Thyroid gland (tissue), 4 donors: ENCODE measurements at regions of chr10 and their contacts with region 1.

Region 1: DNA sequence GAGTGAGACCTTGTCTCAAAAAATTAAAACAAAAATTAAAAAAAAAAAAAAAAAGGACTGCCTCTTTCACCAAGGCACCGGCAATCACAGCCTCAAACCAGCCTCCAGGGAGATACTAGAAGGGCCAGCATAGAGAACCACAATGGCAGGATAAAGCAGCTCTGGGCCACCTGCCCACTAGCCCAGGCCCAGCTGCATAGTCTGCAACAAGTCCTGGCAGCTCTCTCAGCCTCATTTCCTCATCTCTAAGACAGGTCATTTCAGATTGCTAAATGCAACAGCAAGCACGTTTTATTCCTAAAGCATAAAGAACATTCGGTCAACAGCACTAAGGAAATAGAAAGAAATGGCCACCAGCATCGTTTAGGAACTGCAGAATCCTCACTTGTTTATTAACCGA is 28.8 kb downstream of the XPNPEP1 start:
- DNase-seq: peak; percentile 34 to 45
- H3K4me3 ChIP-seq: no peak overlapping the region
- H3K27ac ChIP-seq: peak overlapping the region; percentile 63 to 87 (median 81)
- H3K4me1 ChIP-seq: peaks cover 64 to 93% of the 10 kb centered on the region in 2 donors
- H3K27me3 ChIP-seq: no peaks in the 10 kb centered on the region
- CTCF ChIP-seq: no peak
- POLR2A ChIP-seq: no peak

Region 2: GRCh38 chr10:109966961-109967738 is 72.6 kb after region 1 on chr10:
- intact Hi-C with region 1: loop called (anchors 10 kb)
- DNase-seq: peak; percentile 42
- H3K4me3 ChIP-seq: no peak overlapping the region
- H3K27ac ChIP-seq: peak overlapping the region; percentile 51 to 77 (median 63)
- H3K4me1 ChIP-seq: peaks cover 45 to 62% of the 10 kb centered on the region in 2 donors
- H3K27me3 ChIP-seq: no peaks in the 10 kb centered on the region
- CTCF ChIP-seq: no peak
- POLR2A ChIP-seq: no peak

Region 3: DNA sequence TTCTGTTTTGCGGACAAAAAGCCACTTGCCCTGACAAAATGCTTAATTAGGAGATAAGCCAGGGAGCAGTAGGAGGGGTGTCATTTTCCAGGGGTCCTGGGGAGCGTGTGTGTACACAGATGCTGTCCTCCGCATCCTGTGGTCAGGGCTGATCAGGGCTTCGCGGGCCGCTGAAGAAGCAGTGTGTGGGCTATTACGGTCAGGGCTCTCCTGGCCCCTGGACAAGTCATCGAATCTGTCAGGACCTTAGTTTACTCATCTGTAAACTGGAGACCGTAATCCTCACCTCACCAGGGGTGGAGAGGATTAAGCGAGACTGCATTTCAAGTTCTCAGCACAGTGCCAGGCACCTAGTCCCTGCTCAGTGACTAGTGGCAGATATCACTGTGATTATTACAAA is 286.9 kb after region 1 on chr10:
- intact Hi-C with region 1: no loop called
- DNase-seq: no peak
- H3K4me3 ChIP-seq: no peak overlapping the region
- H3K27ac ChIP-seq: no peak overlapping the region
- H3K4me1 ChIP-seq: no peaks in the 10 kb centered on the region
- H3K27me3 ChIP-seq: no peaks in the 10 kb centered on the region
- CTCF ChIP-seq: no peak
- POLR2A ChIP-seq: no peak

Region 4: GRCh38 chr10:111037864-111038263 is 1143.3 kb after region 1 on chr10:
- intact Hi-C with region 1: no loop called
- DNase-seq: no peak
- H3K4me3 ChIP-seq: no peak overlapping the region
- H3K27ac ChIP-seq: no peak overlapping the region
- H3K4me1 ChIP-seq: no peaks in the 10 kb centered on the region
- H3K27me3 ChIP-seq: no peaks in the 10 kb centered on the region
- CTCF ChIP-seq: no peak
- POLR2A ChIP-seq: no peak